Activated T-helper 1 cell treated with anti-CD3 and anti-CD28 coated beads, Interleukin-12 subunit alpha, Interleukin-12 subunit beta, Interleukin-2, Interleukin-4 antibody, amounts not matched to agents 30 ng/mL and 10 ng/mL and 1 ng/mL, durations not matched to agents 14 hours and 24 hours and 36 hours (primary cell): ENCODE measurements at regions of chr3 and their contacts with region 1.

Region 1: DNA sequence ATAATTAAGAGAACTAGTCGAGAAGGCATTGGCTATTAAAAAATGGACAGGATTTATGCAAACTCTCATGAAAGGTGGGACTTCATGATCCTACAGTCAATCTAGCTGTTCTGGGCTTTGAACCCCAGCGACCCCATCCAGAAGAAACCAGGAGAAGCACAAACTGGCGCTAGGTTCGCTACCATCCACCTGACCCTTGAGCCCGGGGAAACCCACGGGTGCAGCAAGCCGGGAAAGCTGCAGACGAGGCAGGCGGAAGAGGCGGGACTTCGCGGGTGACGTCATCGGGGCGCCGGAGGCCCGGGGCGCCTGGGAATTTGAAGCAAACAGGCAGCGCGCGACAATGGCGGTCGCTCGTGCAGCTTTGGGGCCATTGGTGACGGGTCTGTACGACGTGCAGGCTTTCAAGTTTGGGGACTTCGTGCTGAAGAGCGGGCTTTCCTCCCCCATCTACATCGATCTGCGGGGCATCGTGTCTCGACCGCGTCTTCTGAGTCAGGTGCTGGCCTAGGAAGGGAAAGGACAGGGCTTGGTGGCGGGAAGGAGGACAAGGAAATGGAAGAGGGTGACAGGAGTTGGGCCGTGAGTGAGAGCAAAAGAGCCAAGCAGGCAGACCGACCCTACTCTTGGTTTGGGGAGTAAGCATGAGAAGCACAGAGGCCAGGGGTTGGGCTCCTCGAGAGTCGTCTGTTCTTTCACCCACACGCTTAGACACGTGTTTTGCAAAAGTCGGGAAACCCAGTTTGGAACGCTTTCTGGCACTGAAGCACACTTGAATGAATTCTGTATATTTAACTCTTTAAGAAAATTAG is at the start of gene UMPS:
- DNase-seq: peak; percentile 89
- H3K4me3 Mint-ChIP-seq: peak within 1 kb of the TSS; percentile 100
- H3K27ac Mint-ChIP-seq: peak within 1 kb of the TSS; percentile 100
- H3K4me1 Mint-ChIP-seq: peaks cover 41% of the 10 kb centered on the region
- H3K27me3 Mint-ChIP-seq: peaks cover 23% of the 10 kb centered on the region
- total RNA-seq, gene UMPS: 54.2 and 56.3 TPM in 2 replicates

Region 2: DNA sequence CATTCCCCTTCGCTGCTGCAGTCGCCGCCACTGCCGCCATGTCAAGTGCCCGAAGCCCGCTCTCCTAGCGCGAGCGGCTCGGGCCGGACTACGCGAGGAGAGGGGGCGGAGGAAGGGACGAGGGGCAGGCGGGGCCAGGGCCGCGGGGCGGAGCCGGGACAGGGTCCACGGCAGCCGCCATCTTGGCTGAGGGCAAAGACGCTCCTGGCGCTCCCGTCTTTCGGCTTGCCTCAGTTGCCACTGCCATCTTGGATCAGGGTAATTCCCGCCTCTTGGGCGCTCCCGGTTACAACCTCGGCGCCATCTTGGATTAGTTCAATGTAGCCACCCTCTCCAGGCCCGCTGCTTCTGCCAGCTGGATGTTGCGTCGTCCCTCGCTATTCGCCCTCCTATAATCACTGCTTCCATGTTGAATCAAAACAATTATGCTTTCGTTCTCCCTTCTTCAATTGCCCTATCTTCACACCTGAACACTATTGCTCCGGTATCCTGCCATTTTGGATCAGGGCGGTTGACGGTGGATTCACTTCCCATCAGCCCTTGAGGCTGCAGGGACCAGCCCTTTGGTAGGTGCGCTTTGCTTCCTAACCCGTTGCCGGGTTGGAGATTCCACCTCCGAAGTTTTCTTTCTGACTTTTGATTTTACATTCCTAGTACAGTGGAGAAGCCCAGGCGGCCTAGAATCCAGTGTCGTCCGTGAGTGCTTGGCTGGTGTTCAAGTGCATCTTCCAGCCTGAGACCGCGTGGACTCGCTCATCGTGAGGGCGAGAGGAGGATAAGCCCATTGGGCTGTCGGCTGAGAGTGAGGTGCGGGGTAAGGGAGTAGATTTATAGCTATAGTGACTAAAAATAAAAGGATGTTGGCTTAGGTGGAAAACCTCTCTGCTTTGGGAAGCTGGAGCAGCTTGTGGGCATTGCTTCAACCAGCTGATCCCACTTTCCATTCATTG is 1145.1 kb before region 1 on chr3 and contains the start of gene HACD2:
- intact Hi-C with region 1: loop called (anchors 2 kb)
- DNase-seq: peak; percentile 93
- H3K4me3 Mint-ChIP-seq: no peak within 1 kb of the TSS
- H3K27ac Mint-ChIP-seq: peak within 1 kb of the TSS; percentile 63
- H3K4me1 Mint-ChIP-seq: peaks cover 23% of the 10 kb centered on the region
- H3K27me3 Mint-ChIP-seq: no peaks in the 10 kb centered on the region
- total RNA-seq, gene HACD2: 31.5 TPM in 2 replicates

Region 3: GRCh38 chr3:123960781-123961507 is 769.4 kb before region 1 on chr3 and contains the start of gene CCDC14:
- intact Hi-C with region 1: loop called (anchors 2 kb)
- DNase-seq: peak; percentile 68
- H3K4me3 Mint-ChIP-seq: peak within 1 kb of the TSS; percentile 95
- H3K27ac Mint-ChIP-seq: peak within 1 kb of the TSS; percentile 88
- H3K4me1 Mint-ChIP-seq: peaks cover 30% of the 10 kb centered on the region
- H3K27me3 Mint-ChIP-seq: peaks cover 17% of the 10 kb centered on the region
- total RNA-seq, gene CCDC14: 37.3 and 43.7 TPM in 2 replicates

Region 4: GRCh38 chr3:124639406-124640237 is 90.7 kb before region 1 on chr3:
- intact Hi-C with region 1: loop called (anchors 5 kb)
- DNase-seq: no peak
- H3K4me3 Mint-ChIP-seq: peak overlapping the region; percentile 62
- H3K27ac Mint-ChIP-seq: peak overlapping the region; percentile 80
- H3K4me1 Mint-ChIP-seq: peaks cover 52% of the 10 kb centered on the region
- H3K27me3 Mint-ChIP-seq: peaks cover 52% of the 10 kb centered on the region

Region 5: DNA sequence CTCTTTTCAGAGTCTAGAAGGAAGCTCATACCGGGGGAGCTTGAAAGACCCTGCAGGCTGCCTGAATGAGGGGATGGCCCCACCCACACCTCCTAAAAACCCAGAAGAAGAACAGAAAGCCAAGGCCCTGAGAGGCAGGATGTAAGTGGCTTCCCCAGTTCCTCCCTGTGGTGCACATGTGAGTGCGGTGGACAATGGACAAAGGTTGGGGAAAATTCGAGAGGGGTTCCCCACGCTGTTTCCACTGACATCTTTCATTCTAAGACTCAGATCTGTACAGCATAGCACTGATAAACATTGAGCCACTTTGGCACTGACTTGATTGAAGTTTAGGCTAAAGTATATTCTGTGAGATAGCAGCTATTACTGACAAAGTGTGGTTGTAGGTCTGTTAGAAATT is 79.5 kb before region 1 on chr3:
- intact Hi-C with region 1: loop called (anchors 5 kb)
- DNase-seq: no peak
- H3K4me3 Mint-ChIP-seq: no peak overlapping the region
- H3K27ac Mint-ChIP-seq: peak overlapping the region; percentile 27
- H3K4me1 Mint-ChIP-seq: peaks cover 15% of the 10 kb centered on the region
- H3K27me3 Mint-ChIP-seq: peaks cover 32% of the 10 kb centered on the region

Region 6: GRCh38 chr3:124812291-124813265 is 82.2 kb after region 1 on chr3:
- intact Hi-C with region 1: no loop called
- DNase-seq: no peak
- H3K4me3 Mint-ChIP-seq: no peak overlapping the region
- H3K27ac Mint-ChIP-seq: no peak overlapping the region
- H3K4me1 Mint-ChIP-seq: no peaks in the 10 kb centered on the region
- H3K27me3 Mint-ChIP-seq: peaks cover 12% of the 10 kb centered on the region

Region 7: DNA sequence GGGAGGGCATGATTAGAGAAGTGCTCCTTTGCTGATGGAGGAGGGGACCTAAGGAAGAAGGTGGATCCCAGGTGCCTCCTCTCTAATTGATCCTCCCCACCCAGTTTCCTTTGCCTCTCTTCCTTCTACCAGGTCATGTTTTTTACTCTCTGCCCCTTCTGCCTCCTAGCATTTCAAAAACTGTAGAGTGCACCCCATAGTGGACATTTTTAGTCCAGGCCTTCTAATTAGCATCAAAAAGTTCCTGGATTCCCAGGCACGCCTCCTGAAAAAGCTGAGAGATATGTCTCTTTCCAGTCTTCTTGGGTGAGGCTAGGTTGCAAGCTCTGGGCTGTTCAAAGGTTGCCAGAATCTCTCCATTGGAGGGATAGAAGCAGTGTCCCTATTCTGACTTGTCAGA is 175.5 kb after region 1 on chr3:
- intact Hi-C with region 1: no loop called
- DNase-seq: no peak
- H3K4me3 Mint-ChIP-seq: no peak overlapping the region
- H3K27ac Mint-ChIP-seq: no peak overlapping the region
- H3K4me1 Mint-ChIP-seq: peaks cover 4% of the 10 kb centered on the region
- H3K27me3 Mint-ChIP-seq: peaks cover 23% of the 10 kb centered on the region

Region 8: GRCh38 chr3:124951511-124952281 is 221.4 kb after region 1 on chr3:
- intact Hi-C with region 1: no loop called
- DNase-seq: no peak
- H3K4me3 Mint-ChIP-seq: no peak overlapping the region
- H3K27ac Mint-ChIP-seq: no peak overlapping the region
- H3K4me1 Mint-ChIP-seq: no peaks in the 10 kb centered on the region
- H3K27me3 Mint-ChIP-seq: peaks cover 30% of the 10 kb centered on the region

Region 9: GRCh38 chr3:125594581-125595011 is 864.3 kb after region 1 on chr3:
- intact Hi-C with region 1: loop called (anchors 2 kb)
- DNase-seq: peak; percentile 1
- H3K4me3 Mint-ChIP-seq: peak overlapping the region; percentile 95
- H3K27ac Mint-ChIP-seq: peak overlapping the region; percentile 88
- H3K4me1 Mint-ChIP-seq: peaks cover 28% of the 10 kb centered on the region
- H3K27me3 Mint-ChIP-seq: no peaks in the 10 kb centered on the region

Region 10: DNA sequence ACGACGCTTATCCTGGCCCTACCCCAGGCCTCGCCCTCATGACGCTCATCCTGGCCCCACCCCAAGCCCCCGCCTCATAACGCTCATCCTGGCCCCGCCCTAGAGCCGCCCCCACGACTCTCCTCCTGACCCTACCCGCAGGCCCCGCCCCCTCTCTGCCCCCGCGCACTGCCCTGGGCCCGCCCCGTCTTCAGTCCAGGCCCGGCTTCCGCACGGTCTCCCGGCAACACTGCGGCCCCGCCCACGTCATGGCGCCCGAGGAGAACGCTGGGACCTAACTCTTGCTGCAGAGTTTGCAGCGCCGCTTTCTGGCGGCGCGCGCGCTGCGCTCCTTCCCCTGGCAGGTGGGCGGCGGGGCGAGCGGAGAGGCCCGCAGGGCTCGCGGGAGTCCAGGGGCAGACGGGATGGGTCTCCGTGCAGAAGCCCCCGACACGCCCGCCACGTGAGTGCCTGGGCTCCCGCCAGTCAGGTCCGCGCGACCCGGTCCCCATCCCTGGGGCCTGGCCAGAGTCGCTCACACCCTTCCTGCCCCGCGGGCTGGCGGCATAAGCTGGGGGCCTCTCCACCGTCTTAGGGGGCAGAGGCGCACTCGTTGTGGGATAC is 1186.1 kb after region 1 on chr3:
- intact Hi-C with region 1: loop called (anchors 5 kb)
- DNase-seq: peak; percentile 93
- H3K4me3 Mint-ChIP-seq: peak overlapping the region; percentile 86
- H3K27ac Mint-ChIP-seq: peak overlapping the region; percentile 83
- H3K4me1 Mint-ChIP-seq: peaks cover 24% of the 10 kb centered on the region
- H3K27me3 Mint-ChIP-seq: peaks cover 4% of the 10 kb centered on the region